ENCODE measurements at regions of chr4 and their contacts with region 1.

Region 1: GRCh38 chr4:4541661-4542570 is at the start of gene STX18:
- DNase-seq: peak; percentile 98
- H3K4me3 Mint-ChIP-seq: peak within 1 kb of the TSS; percentile 93
- H3K27ac Mint-ChIP-seq: peak within 1 kb of the TSS; percentile 93
- H3K4me1 Mint-ChIP-seq: peaks cover 35% of the 10 kb centered on the region
- H3K27me3 Mint-ChIP-seq: no peaks in the 10 kb centered on the region
- total RNA-seq, gene STX18: 28.7 and 35.6 TPM in 2 replicates

Region 2: GRCh38 chr4:4248029-4248884 is 293.7 kb before region 1 on chr4 and contains the start of gene TMEM128:
- intact Hi-C with region 1: loop called (anchors 1 kb)
- DNase-seq: peak; percentile 98
- H3K4me3 Mint-ChIP-seq: peak within 1 kb of the TSS; percentile 92
- H3K27ac Mint-ChIP-seq: peak within 1 kb of the TSS; percentile 95
- H3K4me1 Mint-ChIP-seq: peaks cover 20% of the 10 kb centered on the region
- H3K27me3 Mint-ChIP-seq: no peaks in the 10 kb centered on the region
- total RNA-seq, gene TMEM128: 18.5 and 20.7 TPM in 2 replicates

Region 3: GRCh38 chr4:4289941-4290850 is 251.7 kb before region 1 on chr4 and contains the starts of genes LYAR and ZBTB49:
- intact Hi-C with region 1: loop called (anchors 2 kb)
- DNase-seq: peak; percentile 100
- H3K4me3 Mint-ChIP-seq: peak within 1 kb of the TSS; percentile 99
- H3K27ac Mint-ChIP-seq: peak within 1 kb of the TSS; percentile 95
- H3K4me1 Mint-ChIP-seq: peaks cover 41% of the 10 kb centered on the region
- H3K27me3 Mint-ChIP-seq: no peaks in the 10 kb centered on the region
- total RNA-seq, gene LYAR: 93.9 and 95.5 TPM in 2 replicates
- total RNA-seq, gene ZBTB49: 7.2 and 8.6 TPM in 2 replicates

Region 4: GRCh38 chr4:4488405-4489404 is 53.2 kb before region 1 on chr4:
- intact Hi-C with region 1: loop called (anchors 5 kb)
- DNase-seq: peak; percentile 91
- H3K4me3 Mint-ChIP-seq: no peak overlapping the region
- H3K27ac Mint-ChIP-seq: no peak overlapping the region
- H3K4me1 Mint-ChIP-seq: peaks cover 6% of the 10 kb centered on the region
- H3K27me3 Mint-ChIP-seq: no peaks in the 10 kb centered on the region

Region 5: DNA sequence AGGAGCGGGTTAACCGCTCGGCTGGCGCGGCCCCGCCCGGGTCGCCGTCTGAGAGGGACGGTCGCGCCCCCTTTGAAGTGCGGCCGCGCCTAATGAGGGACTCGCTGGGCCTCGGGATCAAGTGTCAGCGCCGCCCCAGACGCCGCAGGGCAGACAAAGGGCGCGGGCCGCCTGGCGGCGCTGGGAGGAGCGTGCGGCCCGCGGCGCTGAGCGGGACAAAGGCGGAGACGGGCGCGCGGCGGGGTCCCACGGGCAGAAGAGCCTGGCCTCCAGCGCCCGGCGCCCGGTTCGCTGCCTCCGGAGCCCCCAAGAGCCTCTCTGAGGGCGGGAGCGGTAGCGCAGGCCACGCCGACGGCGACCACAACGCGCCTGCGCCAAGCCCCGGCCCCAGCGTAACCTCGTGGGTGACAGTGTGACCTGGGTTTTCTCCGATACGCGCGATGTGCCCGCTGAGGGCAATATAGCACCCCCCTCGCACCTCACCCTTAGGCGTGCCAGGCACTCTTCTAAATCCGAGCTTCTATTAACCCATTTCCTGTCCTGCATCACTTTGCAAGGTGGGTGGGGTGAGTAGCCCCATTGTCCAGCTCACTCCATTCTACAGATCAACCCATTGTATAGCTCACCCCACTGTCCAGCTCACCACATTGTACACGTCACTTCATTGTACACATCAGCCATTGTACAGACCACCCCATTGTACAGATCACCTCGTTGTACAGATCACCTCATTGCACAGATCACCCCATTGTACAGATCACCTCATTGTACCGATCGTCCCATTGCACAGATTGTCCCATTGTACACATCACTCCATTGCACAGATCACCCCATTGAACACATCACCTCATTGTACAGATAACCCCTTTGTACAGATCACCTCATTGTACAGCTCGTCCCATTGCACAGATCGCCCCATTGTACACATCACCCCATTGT is 33.6 kb after region 1 on chr4:
- intact Hi-C with region 1: loop called (anchors 1 kb)
- DNase-seq: peak; percentile 73
- H3K4me3 Mint-ChIP-seq: peak overlapping the region; percentile 73
- H3K27ac Mint-ChIP-seq: no peak overlapping the region
- H3K4me1 Mint-ChIP-seq: peaks cover 9% of the 10 kb centered on the region
- H3K27me3 Mint-ChIP-seq: peaks cover 9% of the 10 kb centered on the region

Measured in activated CD4-positive, alpha-beta T cell treated with anti-CD3 and anti-CD28 coated beads, Interleukin-2, amount 10 ng/mL, durations not matched to agents 24 days and 14 days (primary cell).